SK-N-SH (cell line): ENCODE measurements at regions of chr2 and their contacts with region 1.

Region 1: GRCh38 chr2:96024336-96025193 is 10.2 kb downstream of the GPAT2 start:
- DNase-seq: peak; percentile 19
- H3K4me3 ChIP-seq: no peak overlapping the region
- H3K27ac ChIP-seq: no peak overlapping the region
- H3K4me1 ChIP-seq: no peaks in the 10 kb centered on the region
- H3K27me3 ChIP-seq: no peaks in the 10 kb centered on the region
- CTCF ChIP-seq: no peak
- EP300 ChIP-seq: no peak
- RAD21 ChIP-seq: no peak

Region 2: GRCh38 chr2:96138179-96139145 is 113.9 kb after region 1 on chr2 and contains the start of gene ASTL:
- CTCF ChIA-PET with region 1: interaction called, 12 read pairs
- POLR2A ChIA-PET with region 1: no interaction called
- DNase-seq: peak; percentile 73
- H3K4me3 ChIP-seq: no peak within 1 kb of the TSS; a peak in 1 of 4 replicates
- H3K27ac ChIP-seq: no peak within 1 kb of the TSS
- H3K4me1 ChIP-seq: peaks cover 0 to 22% of the 10 kb centered on the region in 2 experiments; a peak in 1 of 4 replicates
- H3K27me3 ChIP-seq: peaks cover 7% of the 10 kb centered on the region; the same call in 1 of the 2 replicates
- CTCF ChIP-seq: peak; percentile 53
- EP300 ChIP-seq: no peak
- RAD21 ChIP-seq: peak; percentile 71
- polyA plus RNA-seq, gene ASTL: not detected in 2 replicates

Region 3: GRCh38 chr2:96241900-96242611 is 217.5 kb after region 1 on chr2:
- CTCF ChIA-PET with region 1: no interaction called
- POLR2A ChIA-PET with region 1: no interaction called
- DNase-seq: no peak
- H3K4me3 ChIP-seq: no peak overlapping the region
- H3K27ac ChIP-seq: peak overlapping the region in 1 of 2 experiments; percentile 43; a peak in 2 of 4 replicates
- H3K4me1 ChIP-seq: no peaks in the 10 kb centered on the region; a peak in 1 of 4 replicates
- H3K27me3 ChIP-seq: no peaks in the 10 kb centered on the region
- CTCF ChIP-seq: no peak
- EP300 ChIP-seq: no peak
- RAD21 ChIP-seq: no peak

Region 4: DNA sequence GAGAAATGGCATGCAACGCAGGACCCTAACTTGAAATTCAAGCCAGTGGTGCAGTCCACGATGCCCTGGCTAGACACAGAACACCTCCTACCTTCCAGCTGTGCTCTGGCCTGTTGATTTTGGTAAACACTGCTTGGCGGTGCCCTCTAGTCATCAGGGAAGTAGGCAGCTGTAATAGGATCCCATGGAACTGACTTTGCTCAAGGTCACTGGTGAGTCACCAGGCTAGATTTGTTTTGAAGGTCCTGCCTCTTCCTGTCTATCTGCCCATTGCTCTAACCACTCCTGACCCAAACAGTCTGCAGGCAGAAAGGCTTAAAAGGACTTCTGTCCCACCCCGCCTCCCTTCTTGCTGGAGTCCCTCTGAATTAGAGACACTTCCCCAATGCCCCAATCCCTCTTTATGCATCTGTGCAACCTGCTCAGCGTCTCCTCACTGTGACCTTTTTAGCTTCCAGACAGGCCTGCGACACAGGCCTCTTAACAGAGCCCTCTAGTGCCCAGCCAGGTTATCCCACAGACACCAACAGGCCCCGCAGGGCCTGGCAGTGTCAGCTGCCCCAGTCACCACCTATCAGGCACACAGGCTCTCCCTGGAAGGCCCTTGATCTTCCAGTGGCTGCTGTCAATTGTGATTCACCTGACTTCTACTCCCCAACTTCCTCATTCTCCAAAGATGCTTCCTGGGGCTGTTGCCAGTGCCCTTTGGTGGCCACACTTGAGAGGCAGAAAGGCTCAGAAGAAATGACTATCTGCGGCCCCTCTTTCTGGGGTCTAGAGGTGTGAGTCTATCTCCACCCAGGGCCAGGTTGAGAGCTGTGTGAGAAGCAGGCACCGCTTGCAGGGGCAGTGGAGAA is 236.1 kb after region 1 on chr2:
- CTCF ChIA-PET with region 1: interaction called, 21 read pairs
- POLR2A ChIA-PET with region 1: no interaction called
- DNase-seq: peak; percentile 81
- H3K4me3 ChIP-seq: peak overlapping the region in 1 of 2 experiments; percentile 21; a peak in 3 of 4 replicates
- H3K27ac ChIP-seq: peak overlapping the region; percentile 70
- H3K4me1 ChIP-seq: peaks cover 34 to 50% of the 10 kb centered on the region in 2 experiments
- H3K27me3 ChIP-seq: no peaks in the 10 kb centered on the region
- CTCF ChIP-seq: peak; percentile 70
- EP300 ChIP-seq: 0 out of 4 replicates have a peak, but pooled peaks of 1 of the 2 experiments have one; percentile 6
- RAD21 ChIP-seq: peak; percentile 61